ENCODE measurements at regions of chr15 and their contacts with region 1.

Region 1: GRCh38 chr15:75842722-75843551 is at the start of gene UBE2Q2:
- DNase-seq: peak; percentile 93
- total RNA-seq, gene UBE2Q2: 44.8 to 60.6 TPM

Region 2: GRCh38 chr15:75903331-75904239 is 60.6 kb after region 1 on chr15 and contains the start of gene FBXO22:
- intact Hi-C with region 1: loop called in 1 of 2 experiments (anchors 10 kb)
- DNase-seq: peak; percentile 98
- total RNA-seq, gene FBXO22: 15.3 to 21.0 TPM